Heart right ventricle (tissue), 16 donors: ENCODE measurements at regions of chr1 and their contacts with region 1.

Region 1: DNA sequence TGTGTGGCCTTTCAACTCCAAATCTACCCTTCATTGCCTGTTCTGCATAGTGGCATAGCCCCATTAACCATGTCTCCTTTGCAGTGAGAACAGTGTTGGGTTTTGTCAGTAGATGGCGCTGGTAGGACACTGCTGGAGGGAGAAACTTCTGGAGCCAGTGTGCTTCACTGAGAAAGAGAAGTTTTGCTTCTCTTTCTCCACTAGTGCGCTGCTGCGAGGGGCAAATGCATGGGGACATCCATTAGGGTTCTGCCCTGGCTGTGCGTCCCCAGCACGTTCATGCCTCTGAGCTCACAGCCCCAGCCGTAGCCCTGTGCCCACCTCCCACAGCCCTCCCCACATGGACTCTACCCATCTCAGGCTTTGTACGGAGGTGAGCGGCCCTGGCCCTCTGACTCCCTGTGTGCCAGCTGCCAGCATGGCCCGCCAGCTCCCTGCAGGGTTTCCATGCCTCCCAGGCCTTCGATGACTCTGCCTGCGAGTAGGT is 53.1 kb downstream of the RIMS3 start:
- DNase-seq: peak in 1 of 2 donors; percentile 74
- ATAC-seq: peak; percentile 75 to 90 (median 84)
- H3K4me3 ChIP-seq: no peak overlapping the region
- H3K27ac ChIP-seq: no peak overlapping the region
- H3K4me1 ChIP-seq: peaks cover 0 to 6% (median 0%) of the 10 kb centered on the region in 9 donors
- H3K27me3 ChIP-seq: peaks cover 0 to 5% (median 0%) of the 10 kb centered on the region in 7 donors
- CTCF ChIP-seq: peak; percentile 42 to 88 (median 84)

Region 2: GRCh38 chr1:40257688-40258444 is 354.5 kb before region 1 on chr1 and contains the start of gene ZMPSTE24:
- intact Hi-C with region 1: no loop called
- DNase-seq: peak; percentile 93 to 98
- ATAC-seq: peak; percentile 99 to 100 (median 100)
- H3K4me3 ChIP-seq: peak within 1 kb of the TSS; percentile 71 to 100 (median 93)
- H3K27ac ChIP-seq: peak within 1 kb of the TSS; percentile 80 to 98 (median 90)
- H3K4me1 ChIP-seq: peaks cover 0 to 61% (median 37%) of the 10 kb centered on the region in 9 donors
- H3K27me3 ChIP-seq: no peaks in the 10 kb centered on the region
- CTCF ChIP-seq: no peak
- total RNA-seq, gene ZMPSTE24: 19.9 to 47.5 (median 30.2) TPM

Region 3: GRCh38 chr1:40849801-40850592 is 237.6 kb after region 1 on chr1:
- intact Hi-C with region 1: loop called in 9 of 10 experiments (anchors 1 to 5 kb)
- DNase-seq: peak; percentile 63 to 64
- ATAC-seq: peak; percentile 79 to 92 (median 87)
- H3K4me3 ChIP-seq: no peak overlapping the region
- H3K27ac ChIP-seq: no peak overlapping the region
- H3K4me1 ChIP-seq: peaks cover 0 to 9% (median 0%) of the 10 kb centered on the region in 9 donors
- H3K27me3 ChIP-seq: no peaks in the 10 kb centered on the region
- CTCF ChIP-seq: peak; percentile 79 to 93 (median 90)